ENCODE measurements at regions of chr2 and their contacts with region 1.

Region 1: GRCh38 chr2:165874445-165875039 is 79.0 kb downstream of the TTC21B start:
- DNase-seq: no peak
- ATAC-seq: peak; percentile 95
- H3K4me3 Mint-ChIP-seq: no peak overlapping the region
- H3K27ac Mint-ChIP-seq: no peak overlapping the region; the same call in 1 of the 2 replicates
- H3K4me1 Mint-ChIP-seq: peaks cover 6% of the 10 kb centered on the region; the same call in 1 of the 2 replicates
- H3K27me3 Mint-ChIP-seq: no peaks in the 10 kb centered on the region
- CTCF ChIP-seq: no peak

Region 2: GRCh38 chr2:165402162-165402561 is 472.4 kb before region 1 on chr2:
- CTCF ChIA-PET with region 1: interaction called, 10 read pairs
- POLR2A ChIA-PET with region 1: no interaction called
- DNase-seq: no peak
- ATAC-seq: no peak
- H3K4me3 Mint-ChIP-seq: no peak overlapping the region
- H3K27ac Mint-ChIP-seq: no peak overlapping the region
- H3K4me1 Mint-ChIP-seq: peaks cover 32% of the 10 kb centered on the region
- H3K27me3 Mint-ChIP-seq: no peaks in the 10 kb centered on the region; the same call in 1 of the 2 replicates
- CTCF ChIP-seq: no peak

Region 3: GRCh38 chr2:165691615-165692014 is 182.9 kb before region 1 on chr2:
- CTCF ChIA-PET with region 1: interaction called, 28 read pairs
- POLR2A ChIA-PET with region 1: no interaction called
- DNase-seq: peak; percentile 57
- ATAC-seq: peak; percentile 98
- H3K4me3 Mint-ChIP-seq: no peak overlapping the region
- H3K27ac Mint-ChIP-seq: no peak overlapping the region
- H3K4me1 Mint-ChIP-seq: peaks cover 21% of the 10 kb centered on the region
- H3K27me3 Mint-ChIP-seq: no peaks in the 10 kb centered on the region
- CTCF ChIP-seq: no peak

Region 4: DNA sequence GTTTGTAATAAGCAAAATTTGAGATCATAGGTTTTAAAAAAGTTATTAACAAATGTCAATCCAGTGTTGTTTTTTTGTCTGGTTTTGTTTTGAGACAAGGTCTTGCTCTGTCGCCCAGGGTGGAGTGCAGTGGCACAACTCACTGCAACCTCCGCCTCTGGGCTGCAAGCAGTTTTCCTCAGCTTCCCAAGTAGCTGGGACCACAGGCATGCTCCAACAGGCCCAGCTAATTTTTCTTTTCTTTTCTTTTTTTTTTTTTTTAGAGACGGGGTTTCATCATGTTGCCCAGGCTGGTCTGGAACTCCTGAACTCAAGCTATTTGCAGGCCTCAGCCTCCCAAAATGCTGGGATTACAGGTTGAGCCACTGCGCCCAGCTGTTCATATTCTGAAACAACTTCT is 111.8 kb before region 1 on chr2:
- CTCF ChIA-PET with region 1: interaction called, 22 read pairs
- POLR2A ChIA-PET with region 1: no interaction called
- DNase-seq: no peak
- ATAC-seq: peak; percentile 64
- H3K4me3 Mint-ChIP-seq: no peak overlapping the region
- H3K27ac Mint-ChIP-seq: peak overlapping the region; percentile 86; the same call in 1 of the 2 replicates
- H3K4me1 Mint-ChIP-seq: peaks cover 49% of the 10 kb centered on the region
- H3K27me3 Mint-ChIP-seq: no peaks in the 10 kb centered on the region
- CTCF ChIP-seq: no peak

Region 5: DNA sequence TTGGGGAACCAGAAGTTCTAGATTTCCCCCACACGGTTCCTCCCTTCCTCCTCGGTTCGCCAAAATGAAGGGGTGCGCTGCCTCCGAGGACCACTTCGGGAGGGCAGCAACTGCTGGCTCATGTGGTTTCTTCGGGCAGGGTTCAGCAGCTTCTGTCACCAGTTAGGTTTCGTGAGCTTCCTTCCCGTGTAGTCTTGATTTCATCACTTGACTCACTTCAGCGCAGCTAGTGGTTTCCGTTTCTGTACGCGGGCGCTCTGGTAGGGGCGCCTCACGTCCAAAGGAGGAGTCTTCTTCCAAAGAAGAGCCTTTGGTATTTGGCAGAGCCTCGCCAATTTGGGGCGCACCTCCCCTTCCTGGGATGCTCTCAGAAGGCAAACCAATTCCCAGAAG is 80.0 kb before region 1 on chr2:
- CTCF ChIA-PET with region 1: interaction called, 19 read pairs
- POLR2A ChIA-PET with region 1: interaction called, 3 read pairs
- DNase-seq: peak; percentile 43
- ATAC-seq: peak; percentile 45
- H3K4me3 Mint-ChIP-seq: peak overlapping the region; percentile 99
- H3K27ac Mint-ChIP-seq: peak overlapping the region; percentile 90
- H3K4me1 Mint-ChIP-seq: peaks cover 63% of the 10 kb centered on the region
- H3K27me3 Mint-ChIP-seq: peaks cover 2% of the 10 kb centered on the region
- CTCF ChIP-seq: no peak

Region 6: GRCh38 chr2:165889158-165889557 is 14.6 kb after region 1 on chr2:
- CTCF ChIA-PET with region 1: interaction called, 11 read pairs
- POLR2A ChIA-PET with region 1: no interaction called
- DNase-seq: no peak
- ATAC-seq: no peak
- H3K4me3 Mint-ChIP-seq: no peak overlapping the region
- H3K27ac Mint-ChIP-seq: peak overlapping the region; percentile 80
- H3K4me1 Mint-ChIP-seq: no peaks in the 10 kb centered on the region
- H3K27me3 Mint-ChIP-seq: no peaks in the 10 kb centered on the region
- CTCF ChIP-seq: no peak

Region 7: DNA sequence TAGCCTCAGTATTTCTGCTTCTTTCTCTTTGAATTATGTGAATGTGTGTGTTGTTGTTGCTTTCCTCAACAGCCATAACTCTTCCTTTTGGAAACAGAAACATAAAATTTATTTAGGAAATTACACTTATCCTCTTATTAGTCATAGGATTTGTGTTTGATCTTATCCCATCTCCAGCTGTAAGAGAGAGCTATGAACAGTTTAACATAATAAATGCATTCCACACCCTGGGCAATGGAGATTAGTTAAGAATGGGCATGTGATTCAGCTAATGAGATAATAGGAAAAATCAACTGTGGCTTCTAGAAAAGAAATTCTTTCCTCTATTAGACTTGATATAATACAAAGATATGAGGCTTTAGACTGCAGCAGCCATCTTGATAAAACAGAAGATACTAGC is 564.5 kb after region 1 on chr2:
- CTCF ChIA-PET with region 1: no interaction called
- POLR2A ChIA-PET with region 1: no interaction called
- DNase-seq: no peak
- ATAC-seq: no peak
- H3K4me3 Mint-ChIP-seq: no peak overlapping the region
- H3K27ac Mint-ChIP-seq: no peak overlapping the region
- H3K4me1 Mint-ChIP-seq: peaks cover 8% of the 10 kb centered on the region
- H3K27me3 Mint-ChIP-seq: no peaks in the 10 kb centered on the region; the same call in 1 of the 2 replicates
- CTCF ChIP-seq: no peak

Measured in WTC11 (cell line).